ENCODE measurements at regions of chr18 and their contacts with region 1.

Region 1: GRCh38 chr18:240175-240574 is 27.7 kb downstream of the THOC1 start:
- DNase-seq: peak; percentile 19
- ATAC-seq: peak; percentile 53; the same call in 1 of the 2 replicates
- H3K4me3 ChIP-seq: no peak overlapping the region
- H3K27ac ChIP-seq: no peak overlapping the region
- H3K4me1 ChIP-seq: no peaks in the 10 kb centered on the region
- H3K27me3 ChIP-seq: no peaks in the 10 kb centered on the region
- CTCF ChIP-seq: no peak
- POLR2A ChIP-seq: no peak
- RAD21 ChIP-seq: no peak

Region 2: GRCh38 chr18:172361-172760 is 67.8 kb before region 1 on chr18:
- CTCF ChIA-PET with region 1: no interaction called
- POLR2A ChIA-PET with region 1: no interaction called
- dilution Hi-C with region 1: no loop called
- in situ Hi-C with region 1: no loop called
- intact Hi-C with region 1: no loop called
- DNase-seq: no peak
- ATAC-seq: no peak
- H3K4me3 ChIP-seq: no peak overlapping the region
- H3K27ac ChIP-seq: no peak overlapping the region
- H3K4me1 ChIP-seq: no peaks in the 10 kb centered on the region
- H3K27me3 ChIP-seq: no peaks in the 10 kb centered on the region
- CTCF ChIP-seq: no peak
- POLR2A ChIP-seq: no peak
- RAD21 ChIP-seq: no peak

Region 3: GRCh38 chr18:191725-192124 is 48.5 kb before region 1 on chr18:
- CTCF ChIA-PET with region 1: no interaction called
- POLR2A ChIA-PET with region 1: no interaction called
- dilution Hi-C with region 1: no loop called
- in situ Hi-C with region 1: no loop called
- intact Hi-C with region 1: loop called (anchors 5 kb)
- DNase-seq: no peak
- ATAC-seq: peak; percentile 46
- H3K4me3 ChIP-seq: no peak overlapping the region
- H3K27ac ChIP-seq: no peak overlapping the region
- H3K4me1 ChIP-seq: no peaks in the 10 kb centered on the region
- H3K27me3 ChIP-seq: no peaks in the 10 kb centered on the region
- CTCF ChIP-seq: no peak
- POLR2A ChIP-seq: no peak
- RAD21 ChIP-seq: no peak

Region 4: GRCh38 chr18:217532-218334 is 22.4 kb before region 1 on chr18:
- CTCF ChIA-PET with region 1: no interaction called
- POLR2A ChIA-PET with region 1: no interaction called
- dilution Hi-C with region 1: no loop called
- in situ Hi-C with region 1: no loop called
- intact Hi-C with region 1: no loop called
- DNase-seq: no peak
- ATAC-seq: no peak
- H3K4me3 ChIP-seq: no peak overlapping the region
- H3K27ac ChIP-seq: no peak overlapping the region
- H3K4me1 ChIP-seq: no peaks in the 10 kb centered on the region
- H3K27me3 ChIP-seq: no peaks in the 10 kb centered on the region
- CTCF ChIP-seq: no peak
- POLR2A ChIP-seq: no peak
- RAD21 ChIP-seq: no peak

Region 5: GRCh38 chr18:1104181-1104881 is 864.2 kb after region 1 on chr18:
- CTCF ChIA-PET with region 1: no interaction called
- POLR2A ChIA-PET with region 1: no interaction called
- dilution Hi-C with region 1: no loop called
- in situ Hi-C with region 1: no loop called
- intact Hi-C with region 1: loop called (anchors 5 kb)
- DNase-seq: no peak
- ATAC-seq: no peak
- H3K4me3 ChIP-seq: no peak overlapping the region
- H3K27ac ChIP-seq: no peak overlapping the region
- H3K4me1 ChIP-seq: no peaks in the 10 kb centered on the region
- H3K27me3 ChIP-seq: no peaks in the 10 kb centered on the region
- CTCF ChIP-seq: no peak
- POLR2A ChIP-seq: no peak
- RAD21 ChIP-seq: no peak

Region 6: GRCh38 chr18:1244397-1245122 is 1004.4 kb after region 1 on chr18:
- CTCF ChIA-PET with region 1: no interaction called
- POLR2A ChIA-PET with region 1: no interaction called
- dilution Hi-C with region 1: no loop called
- in situ Hi-C with region 1: no loop called
- intact Hi-C with region 1: no loop called
- DNase-seq: no peak
- ATAC-seq: no peak
- H3K4me3 ChIP-seq: no peak overlapping the region
- H3K27ac ChIP-seq: no peak overlapping the region
- H3K4me1 ChIP-seq: no peaks in the 10 kb centered on the region
- H3K27me3 ChIP-seq: no peaks in the 10 kb centered on the region
- CTCF ChIP-seq: no peak
- POLR2A ChIP-seq: no peak
- RAD21 ChIP-seq: no peak

Measured in IMR-90 (cell line).